PC-9 (cell line): ENCODE measurements at regions of chr7 and their contacts with region 1.

Region 1: GRCh38 chr7:123580406-123581161 is 21.0 kb upstream of the ASB15 start:
- DNase-seq: peak; percentile 23 to 36
- H3K4me3 ChIP-seq: no peak overlapping the region
- H3K27ac ChIP-seq: no peak overlapping the region
- H3K4me1 ChIP-seq: no peaks in the 10 kb centered on the region
- H3K27me3 ChIP-seq: no peaks in the 10 kb centered on the region
- CTCF ChIP-seq: peak; percentile 82

Region 2: GRCh38 chr7:123522066-123522465 is 58.5 kb before region 1 on chr7:
- CTCF ChIA-PET with region 1: no interaction called
- POLR2A ChIA-PET with region 1: no interaction called
- intact Hi-C with region 1: no loop called
- DNase-seq: peak in 1 of 2 experiments; percentile 86
- H3K4me3 ChIP-seq: no peak overlapping the region
- H3K27ac ChIP-seq: peak overlapping the region; percentile 44
- H3K4me1 ChIP-seq: peaks cover 10% of the 10 kb centered on the region; the same call in 1 of the 2 replicates
- H3K27me3 ChIP-seq: no peaks in the 10 kb centered on the region
- CTCF ChIP-seq: no peak

Region 3: GRCh38 chr7:123624527-123625183 is 44.1 kb after region 1 on chr7:
- CTCF ChIA-PET with region 1: no interaction called
- POLR2A ChIA-PET with region 1: no interaction called
- intact Hi-C with region 1: loop called (anchors 5 kb)
- DNase-seq: peak in 1 of 2 experiments; percentile 58
- H3K4me3 ChIP-seq: no peak overlapping the region
- H3K27ac ChIP-seq: no peak overlapping the region
- H3K4me1 ChIP-seq: 0 out of 2 replicates have a peak, but pooled peaks cover 9% of the 10 kb centered on the region
- H3K27me3 ChIP-seq: no peaks in the 10 kb centered on the region
- CTCF ChIP-seq: peak; percentile 62

Region 4: DNA sequence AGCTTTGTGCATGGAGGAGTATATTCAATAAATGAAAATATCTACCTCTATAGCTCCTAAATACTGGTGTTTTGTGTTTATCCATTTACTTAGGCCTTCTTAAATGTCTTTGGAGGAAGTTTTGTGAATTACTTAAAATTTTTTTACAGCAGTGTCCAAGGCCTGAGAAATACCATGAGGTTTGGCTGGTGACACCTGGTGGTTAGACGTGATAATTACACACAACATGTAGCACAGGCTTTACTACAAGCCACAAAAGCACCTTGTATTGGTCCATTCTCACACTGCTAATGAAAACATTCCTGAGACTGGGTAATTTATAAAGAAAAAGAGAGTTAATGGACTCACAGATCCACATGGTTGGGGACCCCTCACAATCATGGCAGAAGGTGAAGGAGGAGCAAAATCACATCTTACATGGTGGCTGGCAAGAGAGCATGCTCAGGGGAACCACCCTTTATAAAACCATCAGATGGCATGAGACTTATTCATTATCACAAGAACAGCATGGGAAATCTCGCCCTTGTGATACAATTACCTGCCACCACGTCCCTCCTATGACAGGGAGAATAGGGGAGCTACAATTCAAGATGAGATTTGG is 285.0 kb after region 1 on chr7:
- CTCF ChIA-PET with region 1: no interaction called
- POLR2A ChIA-PET with region 1: no interaction called
- intact Hi-C with region 1: loop called (anchors 2 kb)
- DNase-seq: peak; percentile 41 to 51
- H3K4me3 ChIP-seq: no peak overlapping the region
- H3K27ac ChIP-seq: no peak overlapping the region
- H3K4me1 ChIP-seq: peaks cover 6% of the 10 kb centered on the region; the same call in 1 of the 2 replicates
- H3K27me3 ChIP-seq: no peaks in the 10 kb centered on the region
- CTCF ChIP-seq: peak; percentile 87

Region 5: GRCh38 chr7:124643311-124643811 is 1062.8 kb after region 1 on chr7:
- CTCF ChIA-PET with region 1: interaction called, 10 read pairs
- POLR2A ChIA-PET with region 1: no interaction called
- intact Hi-C with region 1: no loop called
- DNase-seq: no peak
- H3K4me3 ChIP-seq: no peak overlapping the region
- H3K27ac ChIP-seq: no peak overlapping the region
- H3K4me1 ChIP-seq: no peaks in the 10 kb centered on the region
- H3K27me3 ChIP-seq: no peaks in the 10 kb centered on the region
- CTCF ChIP-seq: no peak